ENCODE measurements at regions of chr21 and their contacts with region 1.

Region 1: DNA sequence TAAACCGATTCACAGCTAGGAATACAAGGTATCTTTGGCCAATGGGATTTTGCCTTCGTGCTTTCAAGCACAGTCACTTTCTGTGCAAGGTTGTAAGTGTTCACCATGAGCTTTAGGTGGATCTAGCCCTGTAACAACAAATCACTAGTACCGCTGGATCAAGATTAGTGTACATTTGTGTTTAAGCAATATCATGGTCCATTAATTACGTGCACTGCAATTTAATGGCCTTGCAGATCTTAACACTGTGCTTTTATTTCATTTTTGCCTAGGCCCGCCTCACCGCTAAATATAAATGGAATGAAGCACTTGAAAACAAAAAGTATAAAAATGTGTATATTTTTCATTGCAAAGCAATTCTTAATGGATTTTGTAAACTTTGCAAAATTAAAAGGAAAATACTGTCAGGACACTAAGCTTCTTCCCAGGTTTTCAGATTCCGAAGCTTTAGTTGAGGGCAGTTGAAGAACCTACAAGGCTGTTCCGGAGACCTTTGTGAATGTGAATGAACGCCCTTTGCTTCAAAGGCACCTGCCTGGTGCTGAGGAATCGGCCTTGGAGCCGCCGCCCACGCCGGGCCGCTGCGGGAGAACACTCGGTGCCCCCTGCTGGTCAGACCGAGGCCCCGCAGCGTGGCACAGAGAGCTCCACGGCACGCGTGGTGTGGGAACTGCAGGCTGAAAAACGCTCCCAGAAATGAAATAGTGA is 460.9 kb downstream of the DSCAM start:
- DNase-seq: peak; percentile 37
- H3K4me3 ChIP-seq: no peak overlapping the region
- H3K27ac ChIP-seq: no peak overlapping the region
- H3K4me1 ChIP-seq: no peaks in the 10 kb centered on the region
- H3K27me3 ChIP-seq: no peaks in the 10 kb centered on the region
- CTCF ChIP-seq: peak; percentile 49

Region 2: GRCh38 chr21:38903690-38904139 is 1482.3 kb before region 1 on chr21:
- intact Hi-C with region 1: no loop called
- DNase-seq: no peak
- H3K4me3 ChIP-seq: no peak overlapping the region
- H3K27ac ChIP-seq: no peak overlapping the region
- H3K4me1 ChIP-seq: peaks cover 5% of the 10 kb centered on the region
- H3K27me3 ChIP-seq: no peaks in the 10 kb centered on the region
- CTCF ChIP-seq: no peak

Region 3: DNA sequence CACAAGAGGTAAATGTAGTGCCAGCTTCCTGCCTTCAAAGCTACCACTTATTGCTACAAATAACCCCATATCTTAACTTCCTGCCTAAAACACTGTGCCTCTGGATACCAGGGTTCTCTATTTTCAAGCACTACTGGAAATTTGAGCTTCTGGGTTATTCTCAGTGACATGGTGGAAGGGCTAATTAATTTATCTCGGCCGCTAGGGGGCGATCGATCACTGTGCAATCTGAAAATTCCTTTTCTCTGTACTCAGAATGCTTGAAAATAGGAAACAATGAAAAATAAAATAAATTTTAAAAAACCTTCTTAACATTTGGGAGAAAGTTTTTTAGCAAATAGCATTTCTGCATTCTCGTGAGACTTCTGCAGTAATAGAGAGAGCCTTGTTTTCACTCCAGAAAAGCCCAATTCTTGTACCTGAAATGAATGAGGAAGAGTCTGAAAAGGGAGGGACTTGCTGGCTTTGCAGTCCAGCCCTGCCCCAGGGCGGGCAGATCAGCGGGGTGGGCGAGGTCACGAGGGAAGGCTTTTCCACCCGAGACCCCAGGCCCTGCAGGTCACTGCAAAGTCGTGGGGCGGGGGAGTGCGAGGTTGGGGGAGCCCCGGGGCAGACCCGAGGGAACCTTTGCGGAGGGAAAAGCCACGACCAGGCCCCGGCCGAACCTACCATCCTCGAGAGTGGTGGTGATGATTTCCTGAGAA is 242.1 kb before region 1 on chr21:
- intact Hi-C with region 1: loop called (anchors 10 kb)
- DNase-seq: peak; percentile 43
- H3K4me3 ChIP-seq: no peak overlapping the region
- H3K27ac ChIP-seq: no peak overlapping the region
- H3K4me1 ChIP-seq: no peaks in the 10 kb centered on the region
- H3K27me3 ChIP-seq: no peaks in the 10 kb centered on the region
- CTCF ChIP-seq: peak; percentile 76

Region 4: GRCh38 chr21:40318434-40318833 is 67.6 kb before region 1 on chr21:
- intact Hi-C with region 1: no loop called
- DNase-seq: no peak
- H3K4me3 ChIP-seq: no peak overlapping the region
- H3K27ac ChIP-seq: no peak overlapping the region
- H3K4me1 ChIP-seq: no peaks in the 10 kb centered on the region
- H3K27me3 ChIP-seq: no peaks in the 10 kb centered on the region
- CTCF ChIP-seq: no peak

Region 5: GRCh38 chr21:40425981-40426380 is 39.9 kb after region 1 on chr21:
- intact Hi-C with region 1: no loop called
- DNase-seq: no peak
- H3K4me3 ChIP-seq: no peak overlapping the region
- H3K27ac ChIP-seq: no peak overlapping the region
- H3K4me1 ChIP-seq: no peaks in the 10 kb centered on the region
- H3K27me3 ChIP-seq: no peaks in the 10 kb centered on the region
- CTCF ChIP-seq: no peak

Region 6: GRCh38 chr21:40466893-40467501 is 81.0 kb after region 1 on chr21:
- intact Hi-C with region 1: no loop called
- DNase-seq: no peak
- H3K4me3 ChIP-seq: no peak overlapping the region
- H3K27ac ChIP-seq: no peak overlapping the region
- H3K4me1 ChIP-seq: no peaks in the 10 kb centered on the region
- H3K27me3 ChIP-seq: no peaks in the 10 kb centered on the region
- CTCF ChIP-seq: no peak

Measured in colonic mucosa (tissue), 4 donors.